ENCODE measurements at regions of chr12 and their contacts with region 1.

Region 1: DNA sequence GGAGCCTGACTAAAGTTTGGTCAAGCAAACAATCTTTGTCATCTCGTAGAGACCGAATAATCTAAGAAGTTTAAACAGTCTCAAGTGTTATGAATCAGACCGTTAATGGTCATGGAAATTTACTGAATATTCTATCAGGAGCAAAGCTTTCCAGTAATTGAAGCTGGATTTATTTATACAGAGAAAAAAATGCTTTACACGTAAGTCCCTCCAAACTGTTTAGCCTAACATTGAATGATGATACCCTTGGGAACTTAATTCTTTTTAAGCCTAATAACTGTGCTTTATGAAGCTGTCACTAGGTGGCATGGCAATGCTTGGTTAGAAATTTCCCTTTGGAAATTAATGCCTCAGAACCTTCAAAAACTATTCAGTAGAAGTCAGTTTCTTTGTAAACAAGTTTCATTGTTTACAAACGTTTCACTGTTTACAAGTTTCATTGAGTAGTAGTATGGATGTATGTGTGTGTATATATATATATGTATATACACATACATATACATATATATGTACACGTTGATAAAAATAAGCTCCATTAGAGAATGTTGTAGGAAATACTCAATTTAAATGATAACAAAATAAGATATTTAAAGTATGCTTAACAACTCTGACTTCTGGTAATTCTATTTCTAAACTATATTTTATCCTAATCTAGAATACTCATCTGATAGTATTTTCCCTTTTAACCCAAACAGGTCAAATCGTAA is 32.1 kb downstream of the DEPDC4 start:
- DNase-seq: no peak
- H3K4me3 ChIP-seq: no peak overlapping the region
- H3K27ac ChIP-seq: peak overlapping the region in 2 of 4 donors; percentile 23 to 34
- H3K4me1 ChIP-seq: peaks cover 0 to 8% (median 0%) of the 10 kb centered on the region in 4 donors
- H3K27me3 ChIP-seq: no peaks in the 10 kb centered on the region
- CTCF ChIP-seq: peak in 3 of 4 experiments; percentile 42 to 69 (median 45)
- EP300 ChIP-seq: no peak
- POLR2A ChIP-seq: no peak

Region 2: GRCh38 chr12:100185361-100185894 is 49.3 kb before region 1 on chr12:
- intact Hi-C with region 1: no loop called
- DNase-seq: no peak
- H3K4me3 ChIP-seq: peak overlapping the region in 3 of 4 donors; percentile 1 to 23 (median 18)
- H3K27ac ChIP-seq: peak overlapping the region; percentile 59 to 71 (median 70)
- H3K4me1 ChIP-seq: peaks cover 0 to 25% (median 22%) of the 10 kb centered on the region in 4 donors
- H3K27me3 ChIP-seq: no peaks in the 10 kb centered on the region
- CTCF ChIP-seq: no peak
- EP300 ChIP-seq: no peak
- POLR2A ChIP-seq: no peak

Region 3: GRCh38 chr12:100329800-100330199 is 95.0 kb after region 1 on chr12:
- intact Hi-C with region 1: loop called (anchors 10 kb)
- DNase-seq: no peak
- H3K4me3 ChIP-seq: no peak overlapping the region
- H3K27ac ChIP-seq: no peak overlapping the region
- H3K4me1 ChIP-seq: no peaks in the 10 kb centered on the region
- H3K27me3 ChIP-seq: no peaks in the 10 kb centered on the region
- CTCF ChIP-seq: no peak
- EP300 ChIP-seq: no peak
- POLR2A ChIP-seq: no peak

Measured in sigmoid colon (tissue), 7 donors.